CD4-positive, alpha-beta memory T cell (primary cell): ENCODE measurements at regions of chr9 and their contacts with region 1.

Region 1: DNA sequence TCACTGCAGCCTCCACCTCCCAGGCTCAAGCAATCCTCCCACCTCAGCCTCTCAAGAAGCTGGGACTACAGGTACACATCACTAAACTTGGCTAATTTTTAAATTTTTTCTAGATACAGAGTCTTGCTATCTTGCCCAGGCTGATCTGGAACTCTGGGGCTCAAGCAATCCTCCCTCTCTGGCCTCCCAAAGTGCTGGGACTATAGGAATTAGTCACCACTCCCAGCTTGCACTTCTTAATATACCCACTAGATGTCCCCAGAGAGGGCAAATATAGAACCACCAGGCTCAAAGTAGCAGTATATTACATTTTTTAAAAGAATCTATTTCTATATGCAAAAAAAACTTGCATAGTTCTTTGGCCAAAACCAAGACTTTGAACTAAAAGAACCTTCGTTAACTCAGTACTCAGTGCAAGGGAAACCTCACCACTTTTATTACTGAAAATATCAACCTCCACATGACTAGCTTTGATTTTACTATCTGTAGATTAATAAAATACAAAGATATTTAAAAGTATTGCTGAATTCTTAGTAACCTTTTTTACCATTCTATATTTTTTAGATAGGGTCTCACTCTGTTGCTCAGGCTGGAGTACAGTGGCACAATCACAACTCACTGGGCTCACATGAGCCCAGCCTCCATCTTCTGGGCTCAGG is 25.8 kb upstream of the HSD17B3 start:
- DNase-seq: peak; percentile 46 to 66 (median 54)
- H3K4me3 ChIP-seq: no peak overlapping the region
- H3K4me3 Mint-ChIP-seq: no peak overlapping the region
- H3K27ac ChIP-seq: no peak overlapping the region
- H3K27ac Mint-ChIP-seq: peak overlapping the region in 1 of 7 donors; percentile 29
- H3K4me1 ChIP-seq: no peaks in the 10 kb centered on the region
- H3K4me1 Mint-ChIP-seq: no peaks in the 10 kb centered on the region
- H3K27me3 ChIP-seq: no peaks in the 10 kb centered on the region
- H3K27me3 Mint-ChIP-seq: no peaks in the 10 kb centered on the region

Region 2: GRCh38 chr9:96317335-96317980 is 10.4 kb before region 1 on chr9:
- CTCF ChIA-PET with region 1: interaction called, 36 read pairs
- POLR2A ChIA-PET with region 1: no interaction called
- intact Hi-C with region 1: no loop called
- DNase-seq: peak in 4 of 5 donors; percentile 24 to 40 (median 30)
- H3K4me3 ChIP-seq: no peak overlapping the region
- H3K4me3 Mint-ChIP-seq: no peak overlapping the region
- H3K27ac ChIP-seq: no peak overlapping the region
- H3K27ac Mint-ChIP-seq: peak overlapping the region in 2 of 7 donors; percentile 5 to 76
- H3K4me1 ChIP-seq: no peaks in the 10 kb centered on the region
- H3K4me1 Mint-ChIP-seq: peaks cover 0 to 2% (median 0%) of the 10 kb centered on the region in 4 donors
- H3K27me3 ChIP-seq: no peaks in the 10 kb centered on the region
- H3K27me3 Mint-ChIP-seq: peaks cover 0 to 2% of the 10 kb centered on the region in 2 donors